PC-3 (cell line): ENCODE measurements at regions of chr18 and their contacts with region 1.

Region 1: DNA sequence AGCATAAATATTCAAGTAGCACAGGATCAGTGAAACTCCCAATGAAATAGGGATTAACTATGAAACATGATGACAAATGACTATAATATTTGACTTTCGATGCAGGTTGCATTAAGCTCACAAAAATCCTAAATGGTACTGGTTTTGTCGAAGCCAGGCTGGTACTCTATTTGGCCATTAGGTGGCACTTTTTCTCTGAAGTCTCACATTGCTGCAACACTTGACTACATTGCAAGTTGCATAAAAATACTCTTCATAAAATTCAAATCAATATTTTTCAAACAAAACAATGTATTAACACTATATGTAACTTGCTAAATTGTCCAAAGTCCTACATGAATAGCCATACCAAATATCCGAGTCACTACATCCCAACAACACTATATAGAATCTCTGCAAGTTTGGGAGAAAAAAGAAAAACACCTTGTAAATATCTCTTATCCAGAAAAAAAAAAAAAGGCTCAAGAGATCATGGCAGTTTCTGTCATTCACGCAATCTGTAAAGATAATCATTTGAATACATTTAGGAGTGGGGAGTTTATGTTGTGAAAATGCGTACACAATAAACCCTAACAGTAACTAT is 9.5 kb downstream of the RTTN start:
- DNase-seq: peak; percentile 76
- ATAC-seq: peak; percentile 70
- H3K4me3 ChIP-seq: no peak overlapping the region
- H3K27ac ChIP-seq: no peak overlapping the region
- H3K4me1 ChIP-seq: peaks cover 7% of the 10 kb centered on the region; the same call in 1 of the 2 replicates
- H3K27me3 ChIP-seq: no peaks in the 10 kb centered on the region
- CTCF ChIP-seq: peak; percentile 93

Region 2: GRCh38 chr18:70243131-70243530 is 47.2 kb after region 1 on chr18:
- CTCF ChIA-PET with region 1: no interaction called
- POLR2A ChIA-PET with region 1: no interaction called
- intact Hi-C with region 1: loop called (anchors 2 kb)
- DNase-seq: peak; percentile 88
- ATAC-seq: peak; percentile 97
- H3K4me3 ChIP-seq: peak overlapping the region; percentile 59
- H3K27ac ChIP-seq: peak overlapping the region; percentile 95
- H3K4me1 ChIP-seq: peaks cover 16% of the 10 kb centered on the region
- H3K27me3 ChIP-seq: no peaks in the 10 kb centered on the region
- CTCF ChIP-seq: no peak

Region 3: GRCh38 chr18:70384181-70384790 is 188.3 kb after region 1 on chr18:
- CTCF ChIA-PET with region 1: no interaction called
- POLR2A ChIA-PET with region 1: no interaction called
- intact Hi-C with region 1: loop called (anchors 2 kb)
- DNase-seq: peak; percentile 96
- ATAC-seq: peak; percentile 95
- H3K4me3 ChIP-seq: peak overlapping the region; percentile 47; the same call in 1 of the 2 replicates
- H3K27ac ChIP-seq: peak overlapping the region; percentile 97
- H3K4me1 ChIP-seq: peaks cover 24% of the 10 kb centered on the region
- H3K27me3 ChIP-seq: no peaks in the 10 kb centered on the region
- CTCF ChIP-seq: no peak

Region 4: DNA sequence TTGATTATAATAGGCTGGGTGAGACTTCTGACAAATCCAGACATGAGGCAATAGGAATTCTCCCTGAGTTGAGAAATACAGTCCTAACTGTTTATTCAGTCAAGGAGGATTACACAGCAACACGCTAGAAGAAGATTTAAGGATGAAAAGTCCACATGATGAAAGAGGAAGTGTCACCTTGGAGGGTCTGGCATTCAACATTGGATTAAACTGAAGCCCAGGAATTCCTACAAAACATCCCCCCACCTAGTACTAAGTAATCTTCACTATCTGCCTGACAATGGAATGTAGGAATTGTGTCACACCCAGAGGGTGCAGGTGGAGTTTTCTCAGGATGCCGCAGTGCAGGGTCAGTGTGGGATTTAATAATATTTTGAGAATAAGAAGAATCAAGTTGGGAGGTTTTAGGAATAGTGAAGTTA is 235.3 kb after region 1 on chr18:
- CTCF ChIA-PET with region 1: interaction called, 13 read pairs
- POLR2A ChIA-PET with region 1: no interaction called
- intact Hi-C with region 1: loop called (anchors 1 kb)
- DNase-seq: no peak
- ATAC-seq: no peak
- H3K4me3 ChIP-seq: no peak overlapping the region
- H3K27ac ChIP-seq: no peak overlapping the region
- H3K4me1 ChIP-seq: peaks cover 5% of the 10 kb centered on the region; the same call in 1 of the 2 replicates
- H3K27me3 ChIP-seq: no peaks in the 10 kb centered on the region
- CTCF ChIP-seq: no peak

Region 5: GRCh38 chr18:70454704-70455322 is 258.9 kb after region 1 on chr18:
- CTCF ChIA-PET with region 1: interaction called, 3 read pairs
- POLR2A ChIA-PET with region 1: interaction called, 7 read pairs
- intact Hi-C with region 1: loop called (anchors 1 kb)
- DNase-seq: peak; percentile 81
- ATAC-seq: peak; percentile 80
- H3K4me3 ChIP-seq: no peak overlapping the region
- H3K27ac ChIP-seq: no peak overlapping the region
- H3K4me1 ChIP-seq: no peaks in the 10 kb centered on the region
- H3K27me3 ChIP-seq: no peaks in the 10 kb centered on the region
- CTCF ChIP-seq: peak; percentile 90